Adrenal gland (tissue), 19 donors: ENCODE measurements at regions of chr2 and their contacts with region 1.

Region 1: DNA sequence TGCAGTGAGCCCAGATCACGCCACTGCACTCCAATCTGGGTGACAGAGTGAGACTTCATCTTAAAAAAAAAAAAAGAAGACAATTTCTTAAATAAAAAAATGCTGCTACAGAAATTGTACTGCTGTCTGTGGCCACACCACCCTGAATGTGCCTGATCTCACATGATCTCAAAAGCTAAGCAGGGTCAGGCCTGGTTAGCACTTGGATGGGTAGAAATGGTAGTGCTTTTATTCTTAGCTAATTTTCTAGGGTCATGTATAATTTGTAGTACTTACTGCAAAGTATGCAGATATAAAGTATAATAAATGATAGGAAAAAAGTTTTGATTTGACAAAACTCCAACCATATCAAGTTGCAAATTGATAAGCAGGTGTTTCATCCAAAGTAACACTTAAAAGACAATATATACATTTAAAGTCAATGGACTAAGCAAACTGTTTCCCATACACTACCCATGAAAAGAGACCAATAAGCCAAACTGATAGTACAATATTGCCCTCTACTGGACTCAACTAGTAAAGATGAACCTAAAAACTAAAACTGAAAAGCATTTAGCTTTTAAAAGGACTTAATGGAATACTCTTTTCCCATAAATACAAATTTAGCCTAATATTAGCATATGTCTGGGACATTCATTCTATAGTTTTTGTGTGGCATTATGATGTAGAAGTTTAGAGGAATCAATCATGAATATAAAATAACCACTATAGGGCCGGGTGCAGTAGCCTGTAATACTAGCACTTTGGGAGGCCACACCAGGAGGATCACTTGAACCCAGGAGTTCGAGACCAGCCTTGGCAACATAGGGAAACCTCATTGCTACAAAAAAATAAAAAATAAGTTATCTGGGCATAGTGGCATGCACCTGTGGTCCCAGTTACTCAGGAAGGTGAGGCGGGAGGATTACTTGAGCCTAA is 18.6 kb upstream of the PEX13 start:
- DNase-seq: no peak
- H3K4me3 ChIP-seq: no peak overlapping the region
- H3K27ac ChIP-seq: no peak overlapping the region
- H3K4me1 ChIP-seq: no peaks in the 10 kb centered on the region
- H3K27me3 ChIP-seq: no peaks in the 10 kb centered on the region
- CTCF ChIP-seq: peak; percentile 43 to 77 (median 62)
- POLR2A ChIP-seq: no peak

Region 2: GRCh38 chr2:60707750-60708371 is 291.0 kb before region 1 on chr2:
- intact Hi-C with region 1: loop called (anchors 5 to 10 kb)
- DNase-seq: peak in 1 of 7 donors; percentile 16
- H3K4me3 ChIP-seq: no peak overlapping the region
- H3K27ac ChIP-seq: no peak overlapping the region
- H3K4me1 ChIP-seq: no peaks in the 10 kb centered on the region
- H3K27me3 ChIP-seq: no peaks in the 10 kb centered on the region
- CTCF ChIP-seq: peak; percentile 63 to 81 (median 70)
- POLR2A ChIP-seq: no peak

Region 3: DNA sequence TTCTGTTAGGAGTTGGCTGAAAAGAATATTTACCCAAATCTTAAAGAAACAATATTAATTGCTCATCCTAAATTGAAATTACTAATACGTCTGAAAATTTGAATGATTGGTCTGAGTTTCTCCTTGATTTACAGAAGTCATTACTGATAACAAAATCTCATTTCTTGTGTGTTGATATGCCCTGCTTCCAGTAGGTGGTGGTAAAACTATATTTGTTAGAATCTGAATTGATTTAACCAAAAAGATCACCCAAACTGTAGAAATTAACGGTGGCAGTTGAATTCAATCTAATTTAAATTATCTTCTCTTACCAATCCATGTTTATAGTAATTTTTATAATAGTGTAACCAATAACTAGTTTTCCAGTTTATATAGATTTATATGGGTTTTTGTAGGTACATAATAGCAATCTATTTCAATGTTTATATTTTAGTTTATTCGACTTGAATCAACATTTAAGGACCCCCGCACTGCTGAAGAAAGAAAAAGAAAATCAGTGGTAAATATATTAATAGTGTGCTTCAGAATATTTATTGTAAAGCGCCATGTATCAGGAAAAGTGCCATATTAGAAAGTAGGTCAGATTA is 204.5 kb before region 1 on chr2:
- intact Hi-C with region 1: loop called in 1 of 2 experiments (anchors 5 kb)
- DNase-seq: no peak
- H3K4me3 ChIP-seq: no peak overlapping the region
- H3K27ac ChIP-seq: no peak overlapping the region
- H3K4me1 ChIP-seq: no peaks in the 10 kb centered on the region
- H3K27me3 ChIP-seq: no peaks in the 10 kb centered on the region
- CTCF ChIP-seq: peak; percentile 17 to 67 (median 53)
- POLR2A ChIP-seq: no peak

Region 4: DNA sequence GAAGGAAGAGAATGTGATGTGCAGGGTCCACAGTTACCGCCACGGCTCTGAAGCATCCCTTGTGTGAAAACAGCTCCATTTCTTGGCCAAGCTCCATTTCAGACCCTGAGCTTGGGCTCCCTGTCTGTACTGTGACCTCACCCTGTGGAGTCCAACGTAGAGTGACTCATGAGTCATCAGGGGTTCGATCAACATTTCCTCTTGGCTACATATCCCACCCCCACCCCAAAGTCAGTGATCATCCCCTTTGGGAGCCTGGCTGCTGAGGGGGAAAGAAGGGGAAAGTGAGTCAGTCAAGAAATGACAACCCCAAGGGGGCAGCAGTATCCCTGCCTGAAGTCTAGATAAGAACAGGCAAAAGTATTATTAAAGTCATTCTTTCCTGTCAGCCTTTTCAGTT is 180.6 kb before region 1 on chr2:
- intact Hi-C with region 1: loop called in 1 of 2 experiments (anchors 10 kb)
- DNase-seq: peak in 2 of 7 donors; percentile 27 to 49
- H3K4me3 ChIP-seq: no peak overlapping the region
- H3K27ac ChIP-seq: no peak overlapping the region
- H3K4me1 ChIP-seq: no peaks in the 10 kb centered on the region
- H3K27me3 ChIP-seq: no peaks in the 10 kb centered on the region
- CTCF ChIP-seq: peak in 2 of 6 experiments; percentile 7 to 12
- POLR2A ChIP-seq: no peak